ENCODE measurements at regions of chr21 and their contacts with region 1.

Region 1: GRCh38 chr21:37009740-37010341 is 3.3 kb downstream of the RIPPLY3 start:
- DNase-seq: peak; percentile 60 to 85 (median 80)
- ATAC-seq: peak; percentile 91
- H3K4me3 ChIP-seq: peak overlapping the region; percentile 7 to 37
- H3K4me3 Mint-ChIP-seq: peak overlapping the region; percentile 58
- H3K27ac ChIP-seq: no peak overlapping the region
- H3K27ac Mint-ChIP-seq: no peak overlapping the region
- H3K4me1 ChIP-seq: peaks cover 24% of the 10 kb centered on the region
- H3K4me1 Mint-ChIP-seq: peaks cover 16% of the 10 kb centered on the region
- H3K27me3 ChIP-seq: peaks cover 4 to 20% of the 10 kb centered on the region in 2 experiments
- H3K27me3 Mint-ChIP-seq: peaks cover 42% of the 10 kb centered on the region
- CTCF ChIP-seq: peak; percentile 85

Region 2: GRCh38 chr21:36471254-36471723 is 538.6 kb before region 1 on chr21:
- CTCF ChIA-PET with region 1: no interaction called
- POLR2A ChIA-PET with region 1: no interaction called
- intact Hi-C with region 1: no loop called
- DNase-seq: no peak
- ATAC-seq: no peak
- H3K4me3 ChIP-seq: no peak overlapping the region
- H3K4me3 Mint-ChIP-seq: no peak overlapping the region
- H3K27ac ChIP-seq: no peak overlapping the region
- H3K27ac Mint-ChIP-seq: no peak overlapping the region
- H3K4me1 ChIP-seq: no peaks in the 10 kb centered on the region
- H3K4me1 Mint-ChIP-seq: no peaks in the 10 kb centered on the region
- H3K27me3 ChIP-seq: no peaks in the 10 kb centered on the region
- H3K27me3 Mint-ChIP-seq: peaks cover 3% of the 10 kb centered on the region
- CTCF ChIP-seq: no peak

Region 3: DNA sequence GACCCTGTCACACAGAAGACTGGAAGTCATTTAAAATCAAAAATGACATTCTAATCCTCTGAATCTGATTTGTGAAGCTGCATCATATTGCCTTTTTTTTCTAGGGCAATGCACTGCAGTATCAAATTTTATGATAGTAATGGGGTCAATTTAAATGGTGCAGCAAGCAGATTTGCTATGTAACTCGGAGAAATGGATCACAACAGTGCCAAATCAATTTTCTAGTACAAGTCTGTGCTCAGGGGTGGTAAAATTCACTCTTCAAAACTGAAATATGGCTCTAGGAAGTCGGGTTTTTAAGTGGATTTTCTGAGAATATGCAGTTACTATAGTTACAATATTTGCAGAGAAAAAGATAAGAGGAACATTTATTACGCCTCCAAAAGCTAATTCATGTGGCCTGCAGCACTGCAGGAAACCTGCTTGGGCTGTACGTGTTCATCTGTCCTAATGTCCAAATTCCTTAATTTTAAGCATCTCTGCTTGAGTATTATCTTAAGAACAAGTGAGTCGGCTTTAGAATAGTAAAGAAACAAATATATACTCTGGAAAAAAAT is 74.9 kb before region 1 on chr21:
- CTCF ChIA-PET with region 1: interaction called, 6 read pairs
- POLR2A ChIA-PET with region 1: no interaction called
- intact Hi-C with region 1: loop called (anchors 1 kb)
- DNase-seq: no peak
- ATAC-seq: no peak
- H3K4me3 ChIP-seq: no peak overlapping the region
- H3K4me3 Mint-ChIP-seq: no peak overlapping the region
- H3K27ac ChIP-seq: no peak overlapping the region
- H3K27ac Mint-ChIP-seq: no peak overlapping the region
- H3K4me1 ChIP-seq: no peaks in the 10 kb centered on the region
- H3K4me1 Mint-ChIP-seq: peaks cover 3% of the 10 kb centered on the region
- H3K27me3 ChIP-seq: no peaks in the 10 kb centered on the region
- H3K27me3 Mint-ChIP-seq: no peaks in the 10 kb centered on the region
- CTCF ChIP-seq: no peak

Region 4: GRCh38 chr21:36966066-36966820 is 43.6 kb before region 1 on chr21 and contains the start of gene HLCS:
- CTCF ChIA-PET with region 1: interaction called, 4 read pairs
- POLR2A ChIA-PET with region 1: interaction called, 3 read pairs
- intact Hi-C with region 1: loop called in 1 of 2 experiments (anchors 5 kb)
- DNase-seq: peak; percentile 43 to 90 (median 74)
- ATAC-seq: peak; percentile 90
- H3K4me3 ChIP-seq: peak within 1 kb of the TSS; percentile 65 to 66
- H3K4me3 Mint-ChIP-seq: peak within 1 kb of the TSS; percentile 85
- H3K27ac ChIP-seq: peak within 1 kb of the TSS; percentile 63 to 69
- H3K27ac Mint-ChIP-seq: peak within 1 kb of the TSS; percentile 90
- H3K4me1 ChIP-seq: peaks cover 10% of the 10 kb centered on the region
- H3K4me1 Mint-ChIP-seq: peaks cover 21% of the 10 kb centered on the region
- H3K27me3 ChIP-seq: no peaks in the 10 kb centered on the region
- H3K27me3 Mint-ChIP-seq: no peaks in the 10 kb centered on the region
- CTCF ChIP-seq: peak; percentile 36
- total RNA-seq, gene HLCS: 9.7 to 13.6 TPM

Region 5: GRCh38 chr21:36976882-36977651 is 32.8 kb before region 1 on chr21:
- CTCF ChIA-PET with region 1: interaction called, 7 read pairs
- POLR2A ChIA-PET with region 1: no interaction called
- intact Hi-C with region 1: loop called (anchors 1 kb)
- DNase-seq: peak in 5 of 9 experiments; percentile 23 to 75 (median 62)
- ATAC-seq: peak; percentile 77
- H3K4me3 ChIP-seq: no peak overlapping the region
- H3K4me3 Mint-ChIP-seq: no peak overlapping the region
- H3K27ac ChIP-seq: peak overlapping the region in 1 of 2 experiments; percentile 28
- H3K27ac Mint-ChIP-seq: peak overlapping the region; percentile 80
- H3K4me1 ChIP-seq: peaks cover 8% of the 10 kb centered on the region
- H3K4me1 Mint-ChIP-seq: peaks cover 23% of the 10 kb centered on the region
- H3K27me3 ChIP-seq: no peaks in the 10 kb centered on the region
- H3K27me3 Mint-ChIP-seq: peaks cover 2% of the 10 kb centered on the region
- CTCF ChIP-seq: peak; percentile 46